ENCODE measurements at regions of chr2 and their contacts with region 1.

Region 1: DNA sequence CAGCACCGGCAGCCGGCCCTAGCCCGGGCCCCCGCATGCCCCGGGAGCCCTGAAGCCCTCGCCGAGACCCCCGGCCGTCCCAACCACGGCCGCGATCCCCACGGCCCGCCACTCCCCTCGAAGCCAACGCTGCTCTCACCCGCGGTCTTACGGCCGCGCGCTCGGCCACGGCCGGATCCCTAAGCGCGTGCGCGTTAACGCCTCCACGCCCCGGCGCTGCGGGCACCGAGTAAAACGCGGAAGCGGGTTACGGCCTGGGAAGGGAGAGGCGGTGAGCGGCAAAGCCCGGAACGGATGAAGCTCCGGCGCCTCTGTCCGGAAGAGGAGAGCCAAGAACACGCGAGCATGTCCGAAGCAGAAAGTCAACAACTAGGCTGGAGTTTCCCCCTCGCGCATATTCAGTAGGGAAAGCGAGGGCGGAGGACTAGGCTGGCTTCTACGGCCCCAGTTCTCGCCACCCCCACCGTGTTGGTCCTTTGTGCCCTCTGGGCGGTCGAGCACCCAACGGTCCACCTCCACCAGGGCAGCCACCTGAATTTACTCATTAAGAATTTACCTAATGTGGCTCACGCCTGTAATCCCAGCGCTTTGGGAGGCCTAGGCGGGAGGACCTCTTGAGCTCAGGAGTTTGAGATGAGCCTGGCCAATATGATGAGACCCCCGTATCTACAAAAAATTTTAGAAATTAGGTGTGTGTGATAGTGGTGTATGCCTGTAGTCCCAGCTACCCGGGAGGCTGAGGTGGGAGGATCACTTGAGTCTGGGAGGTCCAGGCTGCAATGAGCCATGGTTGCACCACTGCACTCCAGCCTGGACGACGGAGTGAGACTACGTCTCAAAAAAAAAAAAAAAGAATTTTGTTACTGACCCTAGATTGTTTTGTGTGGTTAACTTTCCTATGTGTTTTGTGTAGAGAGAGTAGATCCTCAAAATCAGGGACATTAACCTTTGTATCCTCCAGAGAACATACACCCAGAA is at the start of gene KANSL3:
- DNase-seq: peak; percentile 93
- H3K4me3 ChIP-seq: peak within 1 kb of the TSS; percentile 73 to 87 (median 78)
- H3K27ac ChIP-seq: peak within 1 kb of the TSS; percentile 69
- H3K4me1 ChIP-seq: peaks cover 8% of the 10 kb centered on the region
- H3K27me3 ChIP-seq: no peaks in the 10 kb centered on the region
- CTCF ChIP-seq: no peak
- total RNA-seq, gene KANSL3: 33.1 to 36.2 TPM

Region 2: DNA sequence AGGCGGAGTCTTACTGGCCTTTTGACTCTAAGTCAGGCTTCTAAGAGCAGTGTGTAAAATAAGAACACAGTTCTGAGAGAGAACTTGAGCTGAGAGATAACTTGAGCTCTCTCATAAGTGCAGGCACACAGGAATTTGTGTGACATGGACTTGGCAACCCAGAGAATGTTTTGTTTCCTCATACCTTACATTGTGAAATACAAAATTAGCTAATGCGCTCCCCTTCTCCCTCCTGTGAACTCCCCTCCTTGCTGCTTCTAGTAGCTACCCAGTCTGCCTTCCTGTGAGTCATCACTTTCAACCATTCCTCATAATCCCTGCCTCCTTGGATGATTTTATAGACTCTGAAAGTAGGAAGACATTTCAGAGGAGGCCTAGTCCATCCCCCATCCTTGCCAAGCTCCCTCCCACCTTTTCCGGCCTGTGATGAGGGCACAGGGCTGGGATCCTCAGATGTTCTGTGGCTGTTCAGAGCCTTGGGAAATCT is 26.7 kb after region 1 on chr2:
- CTCF ChIA-PET with region 1: no interaction called
- dilution Hi-C with region 1: no loop called
- in situ Hi-C with region 1: no loop called
- intact Hi-C with region 1: loop called (anchors 2 kb)
- DNase-seq: peak; percentile 97
- H3K4me3 ChIP-seq: no peak overlapping the region
- H3K27ac ChIP-seq: peak overlapping the region; percentile 26
- H3K4me1 ChIP-seq: peaks cover 10% of the 10 kb centered on the region
- H3K27me3 ChIP-seq: no peaks in the 10 kb centered on the region
- CTCF ChIP-seq: no peak

Region 3: GRCh38 chr2:96739633-96740428 is 101.4 kb after region 1 on chr2 and contains the start of gene LMAN2L:
- CTCF ChIA-PET with region 1: no interaction called
- dilution Hi-C with region 1: no loop called
- in situ Hi-C with region 1: no loop called
- intact Hi-C with region 1: loop called (anchors 1 kb)
- DNase-seq: peak; percentile 96
- H3K4me3 ChIP-seq: peak within 1 kb of the TSS; percentile 83 to 93 (median 84)
- H3K27ac ChIP-seq: peak within 1 kb of the TSS; percentile 64
- H3K4me1 ChIP-seq: peaks cover 14% of the 10 kb centered on the region
- H3K27me3 ChIP-seq: no peaks in the 10 kb centered on the region
- CTCF ChIP-seq: peak in 1 of 2 donors; percentile 20
- total RNA-seq, gene LMAN2L: 15.3 to 17.3 TPM

Region 4: GRCh38 chr2:96760036-96760985 is 121.9 kb after region 1 on chr2 and contains the start of gene CNNM4:
- CTCF ChIA-PET with region 1: no interaction called
- dilution Hi-C with region 1: no loop called
- in situ Hi-C with region 1: no loop called
- intact Hi-C with region 1: loop called (anchors 2 kb)
- DNase-seq: peak; percentile 90
- H3K4me3 ChIP-seq: peak within 1 kb of the TSS; percentile 46 to 86 (median 78)
- H3K27ac ChIP-seq: no peak within 1 kb of the TSS
- H3K4me1 ChIP-seq: peaks cover 51% of the 10 kb centered on the region
- H3K27me3 ChIP-seq: no peaks in the 10 kb centered on the region
- CTCF ChIP-seq: peak in 1 of 2 donors; percentile 24
- total RNA-seq, gene CNNM4: 8.1 to 8.2 TPM